ENCODE measurements at regions of chr7 and their contacts with region 1.

Region 1: DNA sequence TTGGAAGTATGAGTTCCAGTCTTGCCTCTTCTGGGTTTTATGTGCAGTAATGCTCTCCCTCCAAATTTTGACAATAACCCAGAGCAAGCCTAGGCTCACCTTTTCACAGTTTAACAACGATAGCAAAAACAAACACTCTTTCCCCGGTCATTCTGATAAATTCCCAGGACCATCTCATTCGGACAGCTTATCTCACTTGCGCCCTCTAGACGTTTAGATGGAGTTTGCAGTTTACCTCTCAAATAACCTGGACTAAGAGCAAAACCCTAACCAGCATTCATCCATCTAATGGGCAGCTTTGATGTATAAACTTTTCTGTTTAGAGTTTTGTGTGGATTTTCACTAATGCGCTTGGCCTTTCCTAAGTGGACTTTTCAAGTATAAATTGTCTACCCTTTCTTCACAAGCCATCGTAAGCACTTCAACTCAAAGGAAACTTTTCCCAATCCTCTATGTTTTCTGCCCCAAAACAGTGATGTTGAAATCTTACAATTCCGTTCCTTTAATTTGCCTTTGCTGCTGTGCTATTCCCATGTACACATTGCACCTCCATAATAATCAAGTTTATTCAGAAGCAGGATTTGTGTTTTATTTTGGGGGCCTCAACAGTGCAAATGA is 114.9 kb downstream of the HDAC9 start:
- DNase-seq: no peak
- ATAC-seq: no peak
- H3K4me3 ChIP-seq: no peak overlapping the region
- H3K27ac ChIP-seq: no peak overlapping the region
- H3K4me1 ChIP-seq: no peaks in the 10 kb centered on the region
- H3K27me3 ChIP-seq: no peaks in the 10 kb centered on the region
- CTCF ChIP-seq: peak; percentile 45

Region 2: GRCh38 chr7:18570890-18571478 is 39.5 kb before region 1 on chr7:
- intact Hi-C with region 1: loop called in 1 of 2 experiments (anchors 1 kb)
- DNase-seq: no peak
- ATAC-seq: peak in 2 of 4 donors; percentile 39 to 55
- H3K4me3 ChIP-seq: no peak overlapping the region
- H3K27ac ChIP-seq: no peak overlapping the region
- H3K4me1 ChIP-seq: peaks cover 32% of the 10 kb centered on the region
- H3K27me3 ChIP-seq: no peaks in the 10 kb centered on the region
- CTCF ChIP-seq: peak; percentile 54

Region 3: DNA sequence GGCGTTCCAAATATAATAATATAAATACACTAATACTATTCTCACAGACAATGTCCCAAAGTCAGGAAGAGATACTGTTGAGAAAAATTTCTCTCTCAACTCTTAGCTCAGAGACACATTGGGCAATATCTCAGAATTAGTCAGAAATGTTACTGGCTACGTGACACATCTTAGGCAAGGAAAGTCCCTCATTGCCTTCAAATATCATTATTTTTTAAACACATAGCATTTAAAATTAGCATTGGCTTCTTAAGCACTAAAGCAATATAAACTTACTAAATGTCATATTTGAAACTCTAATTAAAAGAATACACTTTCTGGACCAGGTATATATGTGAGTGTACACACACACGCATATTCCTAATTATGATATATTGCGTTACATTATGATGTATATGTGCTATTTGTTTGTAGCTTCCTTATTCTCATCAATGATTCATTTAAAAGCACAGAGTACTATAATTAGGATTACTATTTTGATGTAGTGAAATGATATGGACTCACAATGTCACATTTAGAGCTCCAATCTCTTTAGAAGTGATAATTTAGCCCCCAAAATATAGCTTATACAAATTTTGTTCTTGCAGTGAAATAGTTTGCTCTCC is 251.2 kb after region 1 on chr7:
- intact Hi-C with region 1: no loop called
- DNase-seq: no peak
- ATAC-seq: no peak
- H3K4me3 ChIP-seq: no peak overlapping the region
- H3K27ac ChIP-seq: no peak overlapping the region
- H3K4me1 ChIP-seq: no peaks in the 10 kb centered on the region
- H3K27me3 ChIP-seq: no peaks in the 10 kb centered on the region
- CTCF ChIP-seq: no peak